Calu3 (cell line): ENCODE measurements at regions of chr12 and their contacts with region 1.

Region 1: GRCh38 chr12:122825773-122826724 is 9.2 kb upstream of the HIP1R start:
- DNase-seq: peak; percentile 73
- H3K4me3 Mint-ChIP-seq: peak overlapping the region; percentile 56
- H3K27ac Mint-ChIP-seq: peak overlapping the region; percentile 84
- H3K4me1 Mint-ChIP-seq: peaks cover 30% of the 10 kb centered on the region
- H3K27me3 Mint-ChIP-seq: no peaks in the 10 kb centered on the region
- CTCF ChIP-seq: no peak

Region 2: GRCh38 chr12:122318607-122319605 is 507.1 kb before region 1 on chr12:
- CTCF ChIA-PET with region 1: no interaction called
- intact Hi-C with region 1: no loop called
- DNase-seq: no peak
- H3K4me3 Mint-ChIP-seq: no peak overlapping the region
- H3K27ac Mint-ChIP-seq: no peak overlapping the region
- H3K4me1 Mint-ChIP-seq: no peaks in the 10 kb centered on the region
- H3K27me3 Mint-ChIP-seq: no peaks in the 10 kb centered on the region
- CTCF ChIP-seq: no peak

Region 3: DNA sequence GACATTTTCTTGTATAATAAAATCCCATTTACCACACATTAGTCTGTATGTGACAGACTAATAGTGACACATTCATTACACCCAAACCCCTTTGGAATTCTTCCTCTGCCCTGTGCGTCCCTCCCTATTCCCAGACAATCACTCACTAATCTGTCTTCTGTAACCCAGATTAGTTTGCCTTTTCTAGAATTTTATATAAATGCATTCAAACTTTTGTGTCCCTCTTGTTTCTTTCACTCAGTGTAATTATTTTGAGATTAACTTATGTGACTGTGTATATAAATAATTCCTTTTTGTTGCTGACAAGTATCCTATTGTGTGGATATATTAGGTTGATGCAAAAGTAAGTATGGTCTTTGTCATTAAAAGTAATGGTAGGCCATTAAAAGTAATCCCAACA is 18.4 kb before region 1 on chr12:
- CTCF ChIA-PET with region 1: interaction called, 5 read pairs
- intact Hi-C with region 1: loop called (anchors 2 kb)
- DNase-seq: no peak
- H3K4me3 Mint-ChIP-seq: no peak overlapping the region
- H3K27ac Mint-ChIP-seq: no peak overlapping the region
- H3K4me1 Mint-ChIP-seq: peaks cover 10% of the 10 kb centered on the region
- H3K27me3 Mint-ChIP-seq: no peaks in the 10 kb centered on the region
- CTCF ChIP-seq: no peak

Region 4: GRCh38 chr12:122836027-122836921 is 10.2 kb after region 1 on chr12:
- CTCF ChIA-PET with region 1: interaction called, 4 read pairs
- intact Hi-C with region 1: loop called (anchors 2 kb)
- DNase-seq: peak; percentile 60
- H3K4me3 Mint-ChIP-seq: peak overlapping the region; percentile 85
- H3K27ac Mint-ChIP-seq: peak overlapping the region; percentile 74
- H3K4me1 Mint-ChIP-seq: peaks cover 56% of the 10 kb centered on the region
- H3K27me3 Mint-ChIP-seq: no peaks in the 10 kb centered on the region
- CTCF ChIP-seq: no peak